ENCODE measurements at regions of chr9 and their contacts with region 1.

Region 1: DNA sequence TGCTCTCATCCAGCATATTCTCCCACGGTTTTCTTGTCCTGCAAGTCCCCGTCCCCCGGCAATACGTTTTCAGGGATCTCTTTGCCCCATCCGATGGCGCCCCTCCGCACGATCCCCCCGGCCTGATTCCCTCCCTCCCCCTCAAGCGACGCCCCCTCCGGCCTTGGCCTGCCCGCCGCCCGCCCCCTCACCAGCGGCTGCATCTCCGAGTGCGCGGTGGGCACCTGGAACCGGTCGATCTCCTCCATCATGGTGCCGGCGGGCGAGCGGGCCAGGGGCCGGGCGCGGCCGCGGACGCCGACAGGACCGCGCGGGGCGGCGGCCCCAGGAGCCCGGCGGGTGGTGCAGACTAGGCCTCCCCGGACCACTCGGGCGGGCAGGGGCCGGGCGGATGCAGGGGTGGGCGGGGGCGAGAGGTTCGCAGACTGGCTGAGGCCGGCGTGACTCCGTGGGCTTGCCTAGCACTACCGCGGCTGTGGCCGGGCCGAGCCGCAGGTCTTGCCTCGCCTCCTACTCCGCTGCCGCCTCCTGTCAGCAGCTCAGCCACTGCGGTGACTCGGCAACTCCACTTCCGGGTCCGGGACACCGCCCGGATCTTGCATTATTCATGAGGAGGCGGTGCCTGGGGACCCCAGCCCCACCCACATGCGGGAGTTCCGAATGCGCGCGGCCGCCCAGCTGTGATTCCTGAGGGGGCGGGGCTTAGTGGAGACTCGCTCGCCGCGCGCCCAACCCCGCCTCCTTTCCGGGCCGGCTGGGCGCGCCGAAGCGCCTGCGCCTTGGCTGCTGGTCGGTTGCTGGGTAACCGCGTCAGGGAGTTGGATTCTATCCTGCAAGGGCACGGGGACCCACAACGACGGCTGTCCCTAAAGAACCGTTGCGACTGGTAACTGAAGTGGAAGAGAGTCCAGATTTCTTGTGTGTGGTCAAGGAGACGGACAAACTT is at the starts of genes DNAI1 and FAM219A:
- DNase-seq: peak; percentile 95
- ATAC-seq: peak; percentile 95
- H3K4me3 ChIP-seq: peak within 1 kb of the TSS; percentile 78 to 79
- H3K27ac ChIP-seq: peak within 1 kb of the TSS; percentile 4; the same call in 1 of the 2 replicates
- H3K4me1 ChIP-seq: peaks cover 13 to 42% of the 10 kb centered on the region in 2 experiments
- H3K27me3 ChIP-seq: no peaks in the 10 kb centered on the region
- CTCF ChIP-seq: no peak
- POLR2A ChIP-seq: no peak
- RAD21 ChIP-seq: no peak
- total RNA-seq, gene DNAI1: 1.1 TPM
- total RNA-seq, gene FAM219A: 13.4 TPM

Region 2: DNA sequence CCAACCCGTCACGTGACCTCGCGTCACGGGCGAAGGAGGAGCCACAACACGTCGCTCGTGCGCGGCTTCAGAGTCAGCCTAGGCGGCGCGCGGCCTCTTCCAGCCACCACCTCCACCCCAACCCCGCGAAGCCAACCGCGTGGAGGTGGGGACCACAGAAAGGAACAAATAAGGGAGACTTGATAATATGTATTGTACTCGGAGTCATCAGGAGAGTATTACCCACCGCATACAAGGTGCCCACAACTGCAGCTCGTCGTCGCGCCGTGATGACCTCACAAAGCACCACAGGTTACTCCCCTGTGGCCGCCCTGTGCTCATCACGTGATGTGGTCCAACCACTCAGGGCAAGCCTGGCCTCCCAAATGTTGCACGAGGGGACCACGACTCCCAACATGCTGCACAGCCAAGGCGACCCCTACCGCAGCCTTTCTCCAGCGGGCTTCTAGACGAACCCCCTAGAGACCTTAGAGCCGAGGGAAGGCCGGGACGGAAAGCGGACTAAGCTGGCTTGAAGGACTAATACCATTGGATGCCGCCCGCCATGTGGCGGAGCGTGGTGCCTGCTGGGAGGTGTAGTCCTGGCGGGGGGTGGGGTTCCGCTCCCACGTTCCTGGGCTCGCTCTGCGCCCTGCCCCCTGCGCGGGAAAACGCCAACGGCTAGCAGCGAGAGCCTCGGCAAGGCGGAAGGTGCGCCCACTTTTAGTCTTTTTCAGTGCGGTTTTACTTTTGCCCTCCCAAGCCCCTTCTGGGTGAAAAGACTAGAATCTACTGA is 409.2 kb before region 1 on chr9:
- CTCF ChIA-PET with region 1: no interaction called
- POLR2A ChIA-PET with region 1: no interaction called
- RAD21 ChIA-PET with region 1: no interaction called
- intact Hi-C with region 1: loop called (anchors 10 kb)
- DNase-seq: peak; percentile 97
- ATAC-seq: peak; percentile 87
- H3K4me3 ChIP-seq: peak overlapping the region; percentile 88 to 93
- H3K27ac ChIP-seq: peak overlapping the region; percentile 81
- H3K4me1 ChIP-seq: peaks cover 15 to 28% of the 10 kb centered on the region in 2 experiments
- H3K27me3 ChIP-seq: no peaks in the 10 kb centered on the region
- CTCF ChIP-seq: 0 out of 6 replicates have a peak, but pooled peaks of 1 of the 3 experiments have one; percentile 6
- POLR2A ChIP-seq: no peak
- RAD21 ChIP-seq: no peak